ENCODE measurements at regions of chr1 and their contacts with region 1.

Region 1: GRCh38 chr1:92960395-92961130 is 699 bp downstream of the DIPK1A start:
- DNase-seq: no peak
- ATAC-seq: peak; percentile 74

Region 2: DNA sequence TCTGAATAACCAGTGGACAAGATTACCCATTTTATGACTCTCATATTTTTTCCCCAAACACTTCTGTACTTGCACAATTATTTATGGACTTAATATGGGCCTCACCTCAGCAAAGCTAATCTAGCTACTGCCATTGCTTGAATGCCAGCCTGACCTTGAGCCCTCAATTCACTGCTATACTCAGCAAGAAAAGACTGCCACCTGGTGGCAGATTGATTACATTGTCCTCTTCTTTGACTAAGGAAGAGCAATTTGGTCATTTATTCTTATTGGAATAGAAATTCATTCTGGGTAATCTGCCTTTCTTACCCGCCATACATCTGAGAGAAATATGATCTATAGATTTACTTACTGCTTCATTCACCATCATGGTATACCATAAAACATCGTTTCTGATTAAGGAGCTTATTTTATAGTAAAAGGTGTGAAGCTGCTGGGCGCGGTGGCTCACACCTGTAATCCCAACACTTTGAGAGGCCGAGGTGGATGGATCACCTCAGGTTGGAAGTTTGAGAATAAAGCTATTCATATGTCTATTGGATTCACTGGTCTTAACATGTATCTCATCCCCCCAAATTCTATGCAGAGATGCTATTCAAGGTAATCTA is 33.6 kb after region 1 on chr1:
- intact Hi-C with region 1: loop called (anchors 2 kb)
- DNase-seq: no peak
- ATAC-seq: peak; percentile 85

Region 3: DNA sequence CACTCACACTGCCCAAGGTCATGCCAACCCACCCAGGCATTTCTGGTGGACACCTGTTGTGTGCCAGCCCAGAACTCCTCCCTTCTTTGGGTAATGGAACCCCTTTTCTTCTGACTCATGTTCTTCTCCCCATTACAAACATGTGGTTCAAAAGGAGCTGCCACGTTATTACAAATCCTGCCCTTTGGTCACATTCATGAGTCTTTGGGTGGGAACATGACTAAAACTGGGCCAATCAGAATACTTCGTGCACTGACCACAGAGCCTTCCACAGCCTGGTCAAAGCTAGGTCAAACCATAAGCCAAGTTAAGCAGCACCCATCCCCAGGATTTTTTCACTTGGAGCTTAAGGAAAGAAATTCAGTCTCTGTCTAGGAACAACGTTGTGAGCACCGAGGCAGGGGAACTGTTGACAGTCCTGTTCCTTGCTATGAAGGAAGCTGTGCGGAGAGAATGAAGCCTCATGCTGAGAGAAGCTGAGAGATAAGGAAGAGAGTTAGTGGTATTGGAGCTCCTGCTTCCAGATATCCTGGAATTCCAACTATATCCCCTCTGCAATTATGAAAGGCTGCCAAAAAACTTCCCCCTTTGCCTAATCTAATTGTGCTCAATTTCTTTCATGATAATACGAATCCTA is 47.5 kb after region 1 on chr1:
- intact Hi-C with region 1: no loop called
- DNase-seq: no peak
- ATAC-seq: no peak